CD8-positive, alpha-beta T cell (primary cell): ENCODE measurements at regions of chr2 and their contacts with region 1.

Region 1: DNA sequence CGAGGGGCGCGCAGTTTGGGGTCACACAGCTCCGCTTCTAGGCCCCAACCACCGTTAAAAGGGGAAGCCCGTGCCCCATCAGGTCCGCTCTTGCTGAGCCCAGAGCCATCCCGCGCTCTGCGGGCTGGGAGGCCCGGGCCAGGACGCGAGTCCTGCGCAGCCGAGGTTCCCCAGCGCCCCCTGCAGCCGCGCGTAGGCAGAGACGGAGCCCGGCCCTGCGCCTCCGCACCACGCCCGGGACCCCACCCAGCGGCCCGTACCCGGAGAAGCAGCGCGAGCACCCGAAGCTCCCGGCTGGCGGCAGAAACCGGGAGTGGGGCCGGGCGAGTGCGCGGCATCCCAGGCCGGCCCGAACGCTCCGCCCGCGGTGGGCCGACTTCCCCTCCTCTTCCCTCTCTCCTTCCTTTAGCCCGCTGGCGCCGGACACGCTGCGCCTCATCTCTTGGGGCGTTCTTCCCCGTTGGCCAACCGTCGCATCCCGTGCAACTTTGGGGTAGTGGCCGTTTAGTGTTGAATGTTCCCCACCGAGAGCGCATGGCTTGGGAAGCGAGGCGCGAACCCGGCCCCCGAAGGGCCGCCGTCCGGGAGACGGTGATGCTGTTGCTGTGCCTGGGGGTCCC is at the start of gene ITGA4:
- DNase-seq: peak; percentile 78 to 94 (median 86)
- ATAC-seq: peak; percentile 77
- H3K4me3 ChIP-seq: peak within 1 kb of the TSS; percentile 88
- H3K4me3 Mint-ChIP-seq: peak within 1 kb of the TSS; percentile 89
- H3K27ac ChIP-seq: peak within 1 kb of the TSS; percentile 85 to 91
- H3K27ac Mint-ChIP-seq: peak within 1 kb of the TSS; percentile 94
- H3K4me1 ChIP-seq: peaks cover 24% of the 10 kb centered on the region
- H3K4me1 Mint-ChIP-seq: peaks cover 53% of the 10 kb centered on the region
- H3K27me3 ChIP-seq: no peaks in the 10 kb centered on the region
- H3K27me3 Mint-ChIP-seq: no peaks in the 10 kb centered on the region
- CTCF ChIP-seq: peak; percentile 78
- total RNA-seq, gene ITGA4: 102 TPM

Region 2: DNA sequence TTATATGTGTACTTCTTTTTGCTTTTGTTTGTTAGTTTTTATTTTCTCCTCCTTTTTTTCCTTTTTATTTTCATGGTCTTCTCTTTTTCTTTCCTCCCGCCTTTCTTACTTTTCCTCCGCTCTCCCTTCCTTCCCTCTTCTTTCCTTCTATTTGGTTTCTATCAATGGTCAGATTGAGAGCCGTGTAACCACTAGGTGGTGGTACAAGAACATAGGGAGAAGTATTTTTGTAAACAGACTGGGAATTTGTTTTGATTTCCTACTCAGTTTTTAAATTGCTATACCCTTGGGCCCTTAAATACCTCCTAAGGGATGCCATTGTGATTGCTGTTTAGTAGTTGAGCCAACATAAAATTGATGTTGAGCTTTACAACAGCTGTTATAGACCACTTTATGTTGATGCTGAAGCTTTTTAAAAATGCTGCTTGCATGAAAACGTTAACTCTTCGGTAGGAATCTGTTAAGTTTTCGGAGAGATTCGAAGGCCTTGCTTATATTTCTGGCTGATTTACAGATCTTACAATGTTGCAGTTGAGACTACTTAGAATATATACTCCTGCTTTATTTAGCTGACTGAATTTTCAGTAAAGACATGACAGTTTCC is 352.6 kb before region 1 on chr2:
- CTCF ChIA-PET with region 1: interaction called, 44 read pairs
- POLR2A ChIA-PET with region 1: interaction called, 8 read pairs
- intact Hi-C with region 1: loop called (anchors 1 to 2 kb)
- DNase-seq: peak in 4 of 9 experiments; percentile 26 to 83 (median 50)
- ATAC-seq: peak; percentile 44
- H3K4me3 ChIP-seq: no peak overlapping the region
- H3K4me3 Mint-ChIP-seq: no peak overlapping the region
- H3K27ac ChIP-seq: peak overlapping the region in 1 of 2 experiments; percentile 23
- H3K27ac Mint-ChIP-seq: peak overlapping the region; percentile 2
- H3K4me1 ChIP-seq: peaks cover 33% of the 10 kb centered on the region
- H3K4me1 Mint-ChIP-seq: peaks cover 42% of the 10 kb centered on the region
- H3K27me3 ChIP-seq: no peaks in the 10 kb centered on the region
- H3K27me3 Mint-ChIP-seq: no peaks in the 10 kb centered on the region
- CTCF ChIP-seq: peak; percentile 81

Region 3: GRCh38 chr2:181165199-181165868 is 291.9 kb before region 1 on chr2:
- CTCF ChIA-PET with region 1: interaction called, 3 read pairs
- POLR2A ChIA-PET with region 1: interaction called, 7 read pairs
- intact Hi-C with region 1: loop called in 1 of 2 experiments (anchors 5 kb)
- DNase-seq: peak in 4 of 9 experiments; percentile 20 to 78 (median 42)
- ATAC-seq: peak; percentile 76
- H3K4me3 ChIP-seq: peak overlapping the region; percentile 9 to 11
- H3K4me3 Mint-ChIP-seq: peak overlapping the region; percentile 70
- H3K27ac ChIP-seq: peak overlapping the region; percentile 36 to 90
- H3K27ac Mint-ChIP-seq: peak overlapping the region; percentile 95
- H3K4me1 ChIP-seq: peaks cover 45% of the 10 kb centered on the region
- H3K4me1 Mint-ChIP-seq: peaks cover 64% of the 10 kb centered on the region
- H3K27me3 ChIP-seq: no peaks in the 10 kb centered on the region
- H3K27me3 Mint-ChIP-seq: no peaks in the 10 kb centered on the region
- CTCF ChIP-seq: no peak

Region 4: GRCh38 chr2:181305301-181306123 is 151.7 kb before region 1 on chr2:
- CTCF ChIA-PET with region 1: interaction called, 10 read pairs
- POLR2A ChIA-PET with region 1: interaction called, 15 read pairs
- intact Hi-C with region 1: loop called (anchors 1 to 2 kb)
- DNase-seq: peak in 7 of 9 experiments; percentile 31 to 76 (median 54)
- ATAC-seq: peak; percentile 67
- H3K4me3 ChIP-seq: no peak overlapping the region
- H3K4me3 Mint-ChIP-seq: peak overlapping the region; percentile 71
- H3K27ac ChIP-seq: peak overlapping the region; percentile 79
- H3K27ac Mint-ChIP-seq: peak overlapping the region; percentile 96
- H3K4me1 ChIP-seq: peaks cover 78% of the 10 kb centered on the region
- H3K4me1 Mint-ChIP-seq: peaks cover 80% of the 10 kb centered on the region
- H3K27me3 ChIP-seq: no peaks in the 10 kb centered on the region
- H3K27me3 Mint-ChIP-seq: no peaks in the 10 kb centered on the region
- CTCF ChIP-seq: no peak

Region 5: DNA sequence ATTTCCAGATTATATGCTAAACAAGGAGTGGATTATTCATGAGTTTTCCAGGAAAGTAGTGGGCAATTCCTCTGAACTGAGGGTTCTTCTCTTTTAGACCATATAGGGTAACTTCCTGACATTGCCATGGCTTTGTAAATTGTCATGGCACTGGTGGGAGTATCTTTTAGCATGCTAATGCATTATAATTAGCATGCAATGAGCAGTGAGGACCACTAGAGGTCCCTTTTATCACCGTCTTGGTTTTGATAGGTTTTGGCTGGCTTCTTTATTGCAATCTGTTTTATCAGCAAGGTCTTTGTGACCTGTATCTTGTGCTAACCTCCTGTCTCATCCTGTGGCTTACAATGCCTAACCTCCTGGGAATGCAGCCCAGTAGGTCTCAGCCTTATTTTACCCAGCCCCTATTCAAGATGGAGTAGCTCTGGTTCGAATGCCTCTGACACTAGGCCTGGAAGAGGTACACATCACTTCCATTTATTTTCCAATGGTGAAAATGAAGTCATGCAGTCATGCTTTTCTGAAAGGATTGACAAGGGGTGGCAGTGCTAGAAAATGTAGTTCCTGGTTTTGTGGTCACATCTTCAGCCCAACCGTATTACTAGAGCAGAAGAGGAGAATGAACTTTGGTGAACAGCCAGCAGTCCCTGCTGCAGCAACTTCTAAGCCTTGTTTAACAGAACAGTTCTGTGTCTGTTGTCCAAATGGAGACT is 26.7 kb before region 1 on chr2:
- CTCF ChIA-PET with region 1: interaction called, 10 read pairs
- POLR2A ChIA-PET with region 1: interaction called, 3 read pairs
- intact Hi-C with region 1: loop called (anchors 2 kb)
- DNase-seq: peak in 3 of 9 experiments; percentile 14 to 72 (median 62)
- ATAC-seq: peak; percentile 83
- H3K4me3 ChIP-seq: no peak overlapping the region
- H3K4me3 Mint-ChIP-seq: no peak overlapping the region
- H3K27ac ChIP-seq: peak overlapping the region in 1 of 2 experiments; percentile 11
- H3K27ac Mint-ChIP-seq: peak overlapping the region; percentile 75
- H3K4me1 ChIP-seq: peaks cover 10% of the 10 kb centered on the region
- H3K4me1 Mint-ChIP-seq: peaks cover 13% of the 10 kb centered on the region
- H3K27me3 ChIP-seq: no peaks in the 10 kb centered on the region
- H3K27me3 Mint-ChIP-seq: no peaks in the 10 kb centered on the region
- CTCF ChIP-seq: peak; percentile 59